Sciatic nerve (tissue), 2 donors: ENCODE measurements at regions of chr17 and their contacts with region 1.

Region 1: GRCh38 chr17:31321481-31321880 is at the start of gene EVI2A:
- DNase-seq: no peak
- ATAC-seq: peak; percentile 73
- total RNA-seq, gene EVI2A: 9.3 TPM

Region 2: GRCh38 chr17:31269578-31269983 is 51.9 kb before region 1 on chr17:
- intact Hi-C with region 1: loop called (anchors 2 kb)
- DNase-seq: no peak
- ATAC-seq: peak; percentile 63